ENCODE measurements at regions of chr5 and their contacts with region 1.

Region 1: GRCh38 chr5:102583276-102584124 is 84.7 kb upstream of the SLCO6A1 start:
- DNase-seq: no peak
- ATAC-seq: no peak

Region 2: GRCh38 chr5:102545175-102545574 is 38.3 kb before region 1 on chr5:
- intact Hi-C with region 1: no loop called
- DNase-seq: no peak
- ATAC-seq: no peak

Region 3: DNA sequence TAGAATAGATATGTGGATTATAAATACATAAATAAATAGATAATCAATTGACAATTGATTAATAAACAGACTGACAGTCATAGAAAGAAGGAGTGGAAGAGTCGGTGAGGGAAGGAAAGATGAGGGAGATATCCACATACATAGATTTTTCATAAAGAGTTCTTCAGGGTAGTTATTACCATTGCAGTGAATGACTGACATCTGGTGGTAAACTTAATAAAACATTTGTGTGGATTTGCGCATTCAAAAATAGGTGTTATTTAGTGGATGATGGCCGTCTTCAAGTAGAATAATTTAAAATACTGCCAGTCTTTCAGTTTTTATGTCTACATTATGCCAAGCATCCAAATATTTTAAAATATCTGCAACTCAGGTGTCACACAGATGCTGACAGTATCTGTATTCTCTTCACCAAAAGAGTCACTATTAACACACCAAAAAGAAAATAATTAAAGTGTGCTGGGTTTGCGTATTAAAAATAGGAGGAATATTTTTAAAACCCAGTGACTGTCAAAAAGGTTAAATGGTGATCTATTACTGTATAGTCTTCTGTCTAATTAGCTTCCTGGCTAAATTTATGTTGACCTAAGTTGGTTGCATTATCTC is 457.7 kb after region 1 on chr5:
- intact Hi-C with region 1: loop called (anchors 5 kb)
- DNase-seq: no peak
- ATAC-seq: peak; percentile 26